ENCODE measurements at regions of chr7 and their contacts with region 1.

Region 1: DNA sequence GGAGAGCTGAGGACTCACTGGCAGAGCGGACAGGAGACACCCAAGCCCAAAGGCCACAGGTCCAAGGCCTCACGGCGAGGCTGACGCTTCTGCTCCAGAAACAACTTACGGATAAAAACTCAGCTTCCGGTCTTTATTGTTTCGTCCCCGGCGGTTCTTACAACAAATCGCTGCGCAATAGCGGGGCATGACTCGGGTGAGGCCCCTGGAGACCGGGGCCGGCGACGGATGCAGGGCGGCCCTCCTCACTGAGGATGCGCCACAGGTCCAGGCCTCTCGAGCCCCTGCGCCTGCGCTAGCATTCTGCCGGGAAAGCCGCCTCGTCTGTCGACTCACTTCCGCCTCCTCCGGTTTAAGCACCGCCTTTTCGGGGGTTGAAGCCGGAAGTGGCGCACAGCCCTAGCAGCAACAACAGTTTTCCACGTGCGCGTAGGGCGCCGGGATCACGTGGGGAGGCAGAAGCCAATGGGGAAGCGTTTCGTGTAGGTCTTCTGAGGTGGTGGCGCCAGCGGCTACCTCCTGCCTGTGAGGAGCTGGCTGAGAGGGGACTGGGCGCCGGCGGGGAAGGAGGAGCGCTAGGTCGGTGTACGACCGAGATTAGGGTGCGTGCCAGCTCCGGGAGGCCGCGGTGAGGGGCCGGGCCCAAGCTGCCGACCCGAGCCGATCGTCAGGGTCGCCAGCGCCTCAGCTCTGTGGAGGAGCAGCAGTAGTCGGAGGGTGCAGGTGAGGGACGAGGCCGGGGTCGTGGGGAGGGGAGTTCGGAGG is at the starts of genes DNAJB9 and THAP5:
- DNase-seq: peak; percentile 94 to 98
- H3K4me3 ChIP-seq: peak within 1 kb of the TSS; percentile 75 to 90 (median 82)
- H3K27ac ChIP-seq: peak within 1 kb of the TSS; percentile 95
- H3K4me1 ChIP-seq: peaks cover 0 to 4% (median 1%) of the 10 kb centered on the region in 4 experiments; a peak in 1 of 7 replicates
- H3K27me3 ChIP-seq: no peaks in the 10 kb centered on the region
- CTCF ChIP-seq: no peak
- EP300 ChIP-seq: no peak
- POLR2A ChIP-seq: peak; percentile 83 to 88
- RAD21 ChIP-seq: peak in 1 of 2 experiments; percentile 0; a peak in 1 of 4 replicates
- total RNA-seq, gene DNAJB9: 9.7 and 10.1 TPM in 2 replicates
- total RNA-seq, gene THAP5: 24.2 and 25.9 TPM in 2 replicates

Region 2: DNA sequence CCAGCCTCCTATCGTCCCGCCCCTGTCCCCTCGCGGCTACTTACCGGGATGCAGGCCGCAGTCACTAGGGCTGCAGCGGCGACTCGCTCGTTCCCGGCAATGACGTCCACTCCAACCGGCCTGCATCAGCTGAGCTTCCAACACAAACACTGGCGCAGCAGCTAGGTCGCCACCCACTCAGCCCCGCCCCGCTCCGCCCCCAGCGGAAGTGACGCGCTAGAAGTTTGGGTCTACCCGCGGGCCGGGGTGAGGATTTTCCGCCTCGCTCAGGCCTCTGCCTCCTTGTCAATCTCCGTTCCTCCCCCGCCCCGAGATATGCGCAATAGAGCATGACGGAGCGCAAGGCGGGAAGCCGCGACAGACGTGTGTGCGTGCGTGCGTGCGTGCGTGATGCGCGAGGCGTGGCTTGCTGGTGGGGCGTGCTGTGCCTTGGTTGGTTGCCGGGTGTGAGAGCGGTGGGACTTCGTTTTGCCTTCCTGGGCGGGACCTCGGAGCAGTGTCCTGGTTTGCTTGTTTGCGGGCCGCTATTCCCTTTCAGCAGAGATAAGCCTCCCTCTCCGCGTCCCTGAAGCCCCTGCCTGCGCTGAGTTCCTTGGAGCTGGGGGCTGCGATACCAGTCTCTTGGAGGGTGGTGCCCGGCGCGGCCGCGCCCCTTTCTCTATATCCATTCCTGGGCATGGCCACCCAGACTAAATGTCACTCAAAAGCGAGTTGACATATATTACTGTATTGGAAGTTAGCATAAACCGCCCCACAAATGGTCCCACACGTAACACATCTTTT is 43.4 kb before region 1 on chr7 and contains the start of gene PNPLA8:
- CTCF ChIA-PET with region 1: interaction called, 5 read pairs
- POLR2A ChIA-PET with region 1: interaction called, 21 read pairs
- DNase-seq: peak; percentile 97 to 100
- H3K4me3 ChIP-seq: peak within 1 kb of the TSS; percentile 73 to 95 (median 86)
- H3K27ac ChIP-seq: peak within 1 kb of the TSS; percentile 86
- H3K4me1 ChIP-seq: peaks cover 2 to 15% (median 9%) of the 10 kb centered on the region in 4 experiments; a peak in 4 of 7 replicates
- H3K27me3 ChIP-seq: no peaks in the 10 kb centered on the region
- CTCF ChIP-seq: no peak
- EP300 ChIP-seq: no peak; a peak in 1 of 3 replicates
- POLR2A ChIP-seq: peak; percentile 70 to 92
- RAD21 ChIP-seq: no peak
- total RNA-seq, gene PNPLA8: 11.2 and 12.6 TPM in 2 replicates

Measured in H1 (cell line).